Dorsolateral prefrontal cortex (tissue), 120 donors: ENCODE measurements at regions of chr18 and their contacts with region 1.

Region 1: GRCh38 chr18:35040988-35041814 is at the start of gene MAPRE2:
- DNase-seq: peak; percentile 99 to 100 (median 99)
- H3K4me3 ChIP-seq: peak within 1 kb of the TSS; percentile 57 to 99 (median 88)
- H3K27ac ChIP-seq: peak within 1 kb of the TSS; percentile 69 to 98 (median 94)
- H3K27me3 ChIP-seq: no peaks in the 10 kb centered on the region
- CTCF ChIP-seq: peak in 9 of 56 donors; percentile 8 to 36 (median 14)
- total RNA-seq, gene MAPRE2: 105 to 278 (median 202) TPM

Region 2: DNA sequence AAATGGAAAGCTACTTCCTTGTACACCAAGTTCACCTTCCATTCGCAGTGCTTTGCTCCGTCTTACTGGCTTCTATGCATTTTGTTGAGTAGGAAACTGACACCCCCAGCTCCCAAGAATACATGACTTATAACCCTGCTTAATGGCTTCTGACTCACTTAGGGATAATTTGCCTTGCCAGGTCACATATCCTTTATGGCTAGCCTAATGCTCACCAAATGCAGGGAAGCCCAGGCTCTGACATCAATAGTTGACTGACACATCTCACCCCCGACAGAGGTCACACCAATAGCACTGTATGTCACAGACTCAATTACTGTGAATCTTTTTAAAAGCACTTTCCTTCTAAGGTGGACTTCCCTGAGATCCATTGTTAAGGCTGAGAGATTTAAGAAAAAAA is 183.9 kb before region 1 on chr18:
- intact Hi-C with region 1: no loop called
- DNase-seq: no peak
- H3K4me3 ChIP-seq: no peak overlapping the region
- H3K27ac ChIP-seq: no peak overlapping the region
- H3K27me3 ChIP-seq: no peaks in the 10 kb centered on the region
- CTCF ChIP-seq: no peak

Region 3: GRCh38 chr18:35076135-35076924 is 35.1 kb after region 1 on chr18:
- intact Hi-C with region 1: no loop called
- DNase-seq: no peak
- H3K4me3 ChIP-seq: no peak overlapping the region
- H3K27ac ChIP-seq: peak overlapping the region in 15 of 59 donors; percentile 3 to 53 (median 16)
- H3K27me3 ChIP-seq: no peaks in the 10 kb centered on the region
- CTCF ChIP-seq: no peak

Region 4: GRCh38 chr18:35095983-35096676 is 54.9 kb after region 1 on chr18:
- intact Hi-C with region 1: loop called in 1 of 2 experiments (anchors 10 kb)
- DNase-seq: no peak
- H3K4me3 ChIP-seq: no peak overlapping the region
- H3K27ac ChIP-seq: peak overlapping the region in 49 of 59 donors; percentile 0 to 83 (median 46)
- H3K27me3 ChIP-seq: no peaks in the 10 kb centered on the region
- CTCF ChIP-seq: no peak

Region 5: GRCh38 chr18:35132021-35132902 is 91.1 kb after region 1 on chr18:
- intact Hi-C with region 1: loop called in 1 of 2 experiments (anchors 5 kb)
- DNase-seq: no peak
- H3K4me3 ChIP-seq: peak overlapping the region in 14 of 59 donors; percentile 0 to 37 (median 10)
- H3K27ac ChIP-seq: peak overlapping the region; percentile 14 to 87 (median 75)
- H3K27me3 ChIP-seq: no peaks in the 10 kb centered on the region
- CTCF ChIP-seq: peak in 1 of 56 donors; percentile 3